OCI-LY7 (cell line): ENCODE measurements at regions of chr19 and their contacts with region 1.

Region 1: GRCh38 chr19:35775298-35776110 is at the start of gene ARHGAP33:
- DNase-seq: peak; percentile 100
- H3K4me3 ChIP-seq: peak within 1 kb of the TSS; percentile 80
- H3K27ac ChIP-seq: peak within 1 kb of the TSS; percentile 29
- H3K4me1 ChIP-seq: peaks cover 19% of the 10 kb centered on the region
- CTCF ChIP-seq: no peak
- total RNA-seq, gene ARHGAP33: 15.1 and 21.3 TPM in 2 replicates

Region 2: GRCh38 chr19:35748106-35749020 is 27.1 kb before region 1 on chr19 and contains the start of gene LIN37:
- CTCF ChIA-PET with region 1: no interaction called
- POLR2A ChIA-PET with region 1: interaction called, 9 read pairs
- intact Hi-C with region 1: loop called (anchors 1 kb)
- DNase-seq: peak; percentile 99
- H3K4me3 ChIP-seq: peak within 1 kb of the TSS; percentile 78
- H3K27ac ChIP-seq: peak within 1 kb of the TSS; percentile 37
- H3K4me1 ChIP-seq: peaks cover 36% of the 10 kb centered on the region
- CTCF ChIP-seq: no peak
- total RNA-seq, gene LIN37: 6.0 and 11.6 TPM in 2 replicates

Region 3: DNA sequence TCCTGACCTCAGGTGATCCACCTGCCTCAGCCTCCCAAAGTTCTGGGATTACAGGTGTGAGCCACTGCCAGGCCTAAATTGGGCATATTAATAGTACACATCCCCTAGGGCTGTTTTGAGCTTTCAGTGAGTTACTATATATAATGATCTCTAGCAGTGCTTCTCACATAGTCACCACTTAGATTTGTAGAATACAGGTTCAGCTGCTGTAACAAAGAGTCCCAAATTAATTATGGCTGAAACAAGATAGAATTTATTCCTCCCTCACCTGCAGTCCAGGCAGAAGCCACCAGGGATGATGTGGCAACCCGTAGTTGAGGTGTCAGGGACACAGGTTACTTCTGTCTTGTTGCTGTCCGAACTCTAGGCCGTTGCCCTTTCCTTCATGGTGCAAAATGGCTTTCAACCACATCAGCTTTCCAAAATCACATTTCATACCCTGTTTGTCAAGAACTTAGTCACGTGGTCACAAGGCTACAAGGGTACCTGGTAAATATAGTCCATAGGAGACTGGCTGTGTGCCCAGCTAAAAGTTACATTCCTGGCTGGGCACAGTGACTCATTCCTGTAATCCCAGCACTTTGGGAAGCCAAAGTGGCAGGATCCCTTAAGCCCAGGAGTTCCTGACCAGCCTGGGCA is 14.7 kb before region 1 on chr19:
- CTCF ChIA-PET with region 1: no interaction called
- POLR2A ChIA-PET with region 1: no interaction called
- intact Hi-C with region 1: no loop called
- DNase-seq: no peak
- H3K4me3 ChIP-seq: no peak overlapping the region
- H3K27ac ChIP-seq: no peak overlapping the region
- H3K4me1 ChIP-seq: peaks cover 21% of the 10 kb centered on the region
- CTCF ChIP-seq: no peak